ENCODE measurements at regions of chr7 and their contacts with region 1.

Region 1: GRCh38 chr7:47786557-47787248 is 161.6 kb downstream of the PKD1L1 start:
- DNase-seq: peak; percentile 90 to 100
- ATAC-seq: peak; percentile 97
- H3K4me3 ChIP-seq: no peak overlapping the region
- H3K27ac ChIP-seq: peak overlapping the region; percentile 95
- H3K4me1 ChIP-seq: peaks cover 70% of the 10 kb centered on the region
- CTCF ChIP-seq: no peak; the same call in 2 of the 3 replicates
- EP300 ChIP-seq: peak; percentile 95 to 99
- POLR2A ChIP-seq: no peak
- RAD21 ChIP-seq: peak; percentile 34 to 74

Region 2: GRCh38 chr7:47581806-47582763 is 204.6 kb before region 1 on chr7 and contains the start of gene TNS3:
- CTCF ChIA-PET with region 1: no interaction called
- POLR2A ChIA-PET with region 1: interaction called, 12 read pairs
- DNase-seq: peak in 1 of 2 experiments; percentile 72
- ATAC-seq: peak; percentile 37 to 67
- H3K4me3 ChIP-seq: peak within 1 kb of the TSS; percentile 83
- H3K27ac ChIP-seq: peak within 1 kb of the TSS; percentile 99 to 100
- H3K4me1 ChIP-seq: peaks cover 63% of the 10 kb centered on the region
- CTCF ChIP-seq: peak; percentile 39
- EP300 ChIP-seq: no peak
- POLR2A ChIP-seq: peak; percentile 21
- RAD21 ChIP-seq: peak; percentile 1 to 48; a peak in 4 of 5 replicates
- polyA plus RNA-seq, gene TNS3: 134 and 137 TPM in 2 replicates

Region 3: DNA sequence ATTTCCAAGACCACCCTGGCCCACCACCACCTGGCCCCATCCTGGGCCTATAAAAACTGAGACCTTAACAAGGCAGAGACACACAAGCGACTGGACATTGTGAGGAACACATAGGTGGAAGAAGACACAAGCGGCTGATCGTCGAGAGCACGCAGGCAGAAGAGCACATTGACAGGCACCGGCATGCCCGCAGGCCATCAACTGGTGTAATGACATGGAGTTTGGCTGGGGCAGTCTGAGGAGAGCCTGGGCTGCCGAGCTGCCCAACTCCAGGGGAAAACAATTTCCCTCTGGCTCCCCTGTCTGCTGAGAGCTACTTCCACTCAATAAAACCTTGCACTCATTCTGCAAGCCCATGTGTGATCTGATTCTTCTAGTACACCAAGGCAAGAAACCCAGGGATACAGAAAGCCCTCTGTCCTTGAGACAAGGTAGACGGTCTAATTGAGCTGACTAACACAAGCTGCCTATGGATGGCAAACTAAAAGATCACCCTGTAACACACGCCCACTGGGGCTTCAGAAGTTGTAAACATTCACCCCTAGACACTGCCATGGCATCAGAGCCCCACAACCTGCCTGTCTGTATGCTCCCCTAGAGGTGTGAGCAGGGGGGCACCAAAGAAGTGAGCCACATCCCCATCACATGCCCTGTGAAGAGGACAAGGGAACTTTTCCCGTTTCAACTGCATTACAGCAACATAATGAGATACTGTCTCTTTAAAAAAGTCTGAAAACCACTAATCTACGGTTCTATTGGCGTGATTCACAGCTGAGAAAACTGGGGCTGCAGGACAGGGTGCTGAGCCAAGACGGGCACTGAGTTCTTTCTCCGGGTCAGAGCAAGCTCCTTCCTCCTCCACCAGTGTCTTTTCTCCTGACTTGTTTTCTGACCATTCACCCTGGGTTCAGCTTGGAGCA is 186.2 kb before region 1 on chr7:
- CTCF ChIA-PET with region 1: interaction called, 5 read pairs
- POLR2A ChIA-PET with region 1: interaction called, 25 read pairs
- DNase-seq: peak in 1 of 2 experiments; percentile 87
- ATAC-seq: peak; percentile 70 to 71
- H3K4me3 ChIP-seq: peak overlapping the region; percentile 19; the same call in 2 of the 3 replicates
- H3K27ac ChIP-seq: peak overlapping the region; percentile 99
- H3K4me1 ChIP-seq: peaks cover 95% of the 10 kb centered on the region
- CTCF ChIP-seq: no peak
- EP300 ChIP-seq: no peak
- POLR2A ChIP-seq: 0 out of 2 replicates have a peak, but pooled peaks have one; percentile 20
- RAD21 ChIP-seq: peak; percentile 9 to 17; a peak in 3 of 5 replicates

Region 4: DNA sequence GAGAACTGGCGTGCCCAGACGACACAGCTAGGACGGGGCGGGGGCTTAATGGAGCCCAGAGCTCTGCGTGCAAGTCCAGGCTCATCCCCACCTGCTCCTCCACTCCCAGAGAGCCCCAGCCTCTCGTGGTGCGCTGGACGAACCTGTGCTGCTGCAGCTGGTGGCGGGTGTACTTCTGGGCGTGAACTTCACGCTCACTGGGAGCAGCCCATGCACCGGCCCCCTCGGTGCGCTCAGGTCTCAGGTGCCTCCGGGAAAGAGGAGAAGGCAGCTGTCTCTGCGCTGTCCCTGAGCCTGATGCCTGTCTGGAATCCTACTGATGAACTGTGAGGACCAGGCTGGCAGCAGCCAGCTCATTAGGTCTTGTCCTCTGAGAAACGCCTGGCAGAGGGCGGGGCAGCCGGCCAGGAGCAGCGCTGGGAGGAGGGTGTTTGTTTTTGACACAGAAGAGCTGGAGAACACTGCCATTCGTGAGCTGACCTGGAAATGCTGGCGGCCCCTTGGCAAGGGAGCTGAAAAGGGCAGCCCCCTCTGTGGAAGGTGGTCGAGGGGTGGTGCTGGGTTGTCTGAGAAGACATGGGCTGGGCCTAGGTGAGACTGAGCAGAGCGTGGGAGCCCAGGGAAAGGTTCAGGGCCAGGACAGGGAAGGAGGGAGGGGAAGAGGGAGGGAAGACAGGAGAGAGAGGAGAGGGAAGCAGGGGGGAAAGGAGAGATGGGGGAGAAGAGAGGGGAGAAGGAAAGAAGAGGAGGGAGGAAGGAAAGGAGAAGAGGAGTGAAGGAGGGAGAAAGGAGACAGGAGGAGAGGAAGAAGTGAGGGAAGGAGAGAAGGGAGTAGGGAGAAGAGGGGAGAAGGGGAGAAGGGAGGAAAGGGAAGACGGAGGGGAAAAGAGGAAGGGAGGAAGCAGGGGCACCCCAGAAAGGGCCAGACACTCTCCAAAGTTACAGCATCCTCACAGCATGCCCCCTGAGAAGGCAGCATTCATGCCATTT is 151.3 kb before region 1 on chr7:
- CTCF ChIA-PET with region 1: no interaction called
- POLR2A ChIA-PET with region 1: interaction called, 11 read pairs
- DNase-seq: peak; percentile 73 to 83
- ATAC-seq: peak; percentile 82 to 86
- H3K4me3 ChIP-seq: peak overlapping the region; percentile 40
- H3K27ac ChIP-seq: peak overlapping the region; percentile 89 to 90
- H3K4me1 ChIP-seq: peaks cover 65% of the 10 kb centered on the region
- CTCF ChIP-seq: no peak
- EP300 ChIP-seq: no peak
- POLR2A ChIP-seq: peak; percentile 59
- RAD21 ChIP-seq: no peak; a peak in 1 of 5 replicates

Region 5: DNA sequence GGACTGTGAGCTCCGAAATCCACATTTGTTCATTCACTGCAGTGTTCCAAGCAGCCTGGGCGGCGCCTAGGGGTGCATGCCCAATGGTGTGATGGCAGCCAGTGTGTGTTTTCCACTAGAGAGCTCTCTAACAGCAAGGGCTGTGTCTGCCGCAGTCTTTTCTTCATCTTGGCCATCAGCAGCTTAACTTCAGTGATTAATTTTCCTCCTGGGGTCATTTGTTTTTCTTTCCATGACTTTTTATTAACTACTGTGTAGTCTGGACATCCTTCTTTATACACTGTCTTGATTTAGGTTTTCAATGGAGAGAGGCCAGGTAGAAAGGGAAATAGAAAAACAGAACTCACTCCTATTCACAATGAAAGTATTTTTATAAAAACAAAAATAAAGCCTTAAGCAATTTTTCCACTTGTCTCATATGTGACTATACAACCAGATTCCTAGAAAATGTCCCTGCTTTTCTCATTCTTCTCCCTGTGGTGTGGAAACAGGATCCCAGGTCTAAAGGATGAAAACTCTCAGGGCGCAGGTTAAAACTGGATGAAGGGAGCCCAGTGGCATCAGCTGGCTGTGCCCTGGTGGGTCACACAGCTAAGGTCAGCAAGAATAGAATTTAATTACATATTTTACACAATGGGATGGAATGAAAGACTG is 15.2 kb before region 1 on chr7:
- CTCF ChIA-PET with region 1: interaction called, 25 read pairs
- POLR2A ChIA-PET with region 1: interaction called, 4 read pairs
- DNase-seq: peak; percentile 46 to 78
- ATAC-seq: peak; percentile 98 to 99
- H3K4me3 ChIP-seq: no peak overlapping the region
- H3K27ac ChIP-seq: peak overlapping the region; percentile 75 to 82
- H3K4me1 ChIP-seq: peaks cover 39% of the 10 kb centered on the region
- CTCF ChIP-seq: no peak; the same call in 1 of the 3 replicates
- EP300 ChIP-seq: no peak
- POLR2A ChIP-seq: no peak
- RAD21 ChIP-seq: peak; percentile 35 to 44; a peak in 2 of 5 replicates

Measured in A549 (cell line).